ENCODE measurements at regions of chr22 and their contacts with region 1.

Region 1: GRCh38 chr22:48459859-48460823 is 1367.5 kb downstream of the BRD1 start:
- DNase-seq: no peak
- H3K4me3 ChIP-seq: no peak overlapping the region
- H3K27ac ChIP-seq: no peak overlapping the region
- H3K4me1 ChIP-seq: no peaks in the 10 kb centered on the region
- H3K27me3 ChIP-seq: no peaks in the 10 kb centered on the region
- CTCF ChIP-seq: no peak
- EP300 ChIP-seq: no peak
- POLR2A ChIP-seq: no peak

Region 2: GRCh38 chr22:48517039-48518030 is 57.2 kb after region 1 on chr22:
- intact Hi-C with region 1: loop called in 1 of 4 experiments (anchors 10 kb)
- DNase-seq: no peak
- H3K4me3 ChIP-seq: no peak overlapping the region
- H3K27ac ChIP-seq: no peak overlapping the region
- H3K4me1 ChIP-seq: peaks cover 12% of the 10 kb centered on the region
- H3K27me3 ChIP-seq: no peaks in the 10 kb centered on the region
- CTCF ChIP-seq: no peak
- EP300 ChIP-seq: no peak
- POLR2A ChIP-seq: no peak

Measured in ovary (tissue), 10 donors.